Endothelial cell of umbilical vein (primary cell): ENCODE measurements at regions of chr2 and their contacts with region 1.

Region 1: GRCh38 chr2:206800506-206801417 is 35.4 kb downstream of the FASTKD2 start:
- DNase-seq: peak; percentile 82
- H3K4me3 ChIP-seq: no peak overlapping the region
- H3K27ac ChIP-seq: no peak overlapping the region
- H3K4me1 ChIP-seq: peaks cover 14% of the 10 kb centered on the region
- H3K27me3 ChIP-seq: no peaks in the 10 kb centered on the region
- CTCF ChIP-seq: peak; percentile 55 to 68
- POLR2A ChIP-seq: no peak

Region 2: GRCh38 chr2:206783718-206784117 is 17.0 kb before region 1 on chr2:
- CTCF ChIA-PET with region 1: interaction called, 19 read pairs
- POLR2A ChIA-PET with region 1: no interaction called
- dilution Hi-C with region 1: no loop called
- intact Hi-C with region 1: no loop called
- DNase-seq: no peak
- H3K4me3 ChIP-seq: no peak overlapping the region
- H3K27ac ChIP-seq: no peak overlapping the region
- H3K4me1 ChIP-seq: peaks cover 3% of the 10 kb centered on the region
- H3K27me3 ChIP-seq: no peaks in the 10 kb centered on the region
- CTCF ChIP-seq: peak; percentile 40 to 71
- POLR2A ChIP-seq: no peak

Region 3: DNA sequence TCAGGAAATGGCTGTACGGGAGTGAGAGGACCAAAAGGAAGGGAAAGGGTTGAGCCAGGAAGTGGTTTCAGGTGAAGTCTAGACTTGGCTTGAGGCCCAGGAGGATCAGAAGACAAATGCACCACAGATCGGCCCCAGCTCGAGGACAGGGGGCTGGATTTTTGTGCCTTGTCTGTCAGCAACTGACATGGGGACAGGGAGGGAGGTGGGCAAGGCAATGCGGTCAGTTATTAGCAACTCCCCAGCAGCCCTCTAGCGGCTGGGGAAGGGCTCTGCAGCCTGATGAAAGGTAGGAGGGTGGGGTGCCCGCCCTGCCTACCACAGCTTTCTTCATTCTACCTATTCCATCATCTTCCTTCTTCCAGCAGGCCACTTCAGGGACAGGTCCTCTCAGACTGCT is 188.5 kb after region 1 on chr2:
- CTCF ChIA-PET with region 1: interaction called, 8 read pairs
- POLR2A ChIA-PET with region 1: no interaction called
- dilution Hi-C with region 1: no loop called
- intact Hi-C with region 1: loop called (anchors 2 kb)
- DNase-seq: peak; percentile 19
- H3K4me3 ChIP-seq: no peak overlapping the region
- H3K27ac ChIP-seq: no peak overlapping the region
- H3K4me1 ChIP-seq: no peaks in the 10 kb centered on the region
- H3K27me3 ChIP-seq: no peaks in the 10 kb centered on the region
- CTCF ChIP-seq: peak; percentile 66 to 90
- POLR2A ChIP-seq: no peak

Region 4: GRCh38 chr2:207725873-207726578 is 925.3 kb after region 1 on chr2:
- CTCF ChIA-PET with region 1: no interaction called
- POLR2A ChIA-PET with region 1: no interaction called
- dilution Hi-C with region 1: no loop called
- intact Hi-C with region 1: loop called (anchors 10 kb)
- DNase-seq: peak; percentile 62
- H3K4me3 ChIP-seq: no peak overlapping the region
- H3K27ac ChIP-seq: no peak overlapping the region
- H3K4me1 ChIP-seq: peaks cover 20% of the 10 kb centered on the region
- H3K27me3 ChIP-seq: no peaks in the 10 kb centered on the region
- CTCF ChIP-seq: no peak
- POLR2A ChIP-seq: no peak